Activated T-helper 1 cell treated with anti-CD3 and anti-CD28 coated beads, Interleukin-12 subunit alpha, Interleukin-12 subunit beta, Interleukin-2, Interleukin-4 antibody, amounts not matched to agents 30 ng/mL and 10 ng/mL and 1 ng/mL, durations not matched to agents 14 hours and 24 hours and 36 hours (primary cell): ENCODE measurements at regions of chr14 and their contacts with region 1.

Region 1: DNA sequence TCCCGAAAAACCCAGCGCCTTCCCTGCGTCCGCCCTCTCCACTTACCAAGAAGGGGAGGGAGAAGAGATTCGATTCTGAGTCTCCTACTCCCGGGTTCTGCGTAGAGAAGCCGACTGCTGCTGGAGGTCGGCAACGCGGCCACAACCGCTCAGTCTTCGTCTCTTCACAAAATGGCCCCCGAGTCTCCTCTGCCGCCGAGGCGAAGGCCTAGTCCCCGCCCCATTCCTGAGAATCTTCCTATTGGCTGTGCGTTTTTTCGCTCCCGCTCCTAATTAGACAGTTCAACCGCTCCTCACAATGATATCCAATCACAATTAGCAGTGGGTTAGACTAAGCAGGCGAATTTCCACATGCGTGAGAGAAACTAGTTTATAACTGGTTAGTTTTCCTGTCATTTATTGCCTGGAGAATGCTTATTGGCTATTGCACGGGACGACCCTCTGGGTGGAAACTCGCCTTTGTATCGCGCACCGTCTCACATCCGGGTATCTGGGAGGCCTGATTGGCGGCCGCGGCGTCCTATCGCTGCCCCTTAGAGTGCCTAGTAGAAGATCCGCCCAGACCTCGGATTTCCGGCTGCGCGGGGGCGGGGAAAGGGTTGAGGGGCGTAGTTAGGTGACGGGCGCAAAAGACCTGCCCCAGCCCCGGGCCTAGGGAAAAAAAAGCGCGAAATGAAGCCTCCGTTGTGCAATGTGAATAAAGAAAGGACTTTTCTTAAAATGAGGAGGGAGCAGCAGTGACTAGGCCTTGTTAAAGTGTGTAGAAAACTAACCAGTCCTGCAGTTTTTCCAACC is at the start of gene HNRNPC:
- DNase-seq: peak; percentile 100
- H3K4me3 Mint-ChIP-seq: peak within 1 kb of the TSS; percentile 99
- H3K27ac Mint-ChIP-seq: peak within 1 kb of the TSS; percentile 100
- H3K4me1 Mint-ChIP-seq: peaks cover 34% of the 10 kb centered on the region
- H3K27me3 Mint-ChIP-seq: no peaks in the 10 kb centered on the region
- total RNA-seq, gene HNRNPC: 958 and 976 TPM in 2 replicates

Region 2: DNA sequence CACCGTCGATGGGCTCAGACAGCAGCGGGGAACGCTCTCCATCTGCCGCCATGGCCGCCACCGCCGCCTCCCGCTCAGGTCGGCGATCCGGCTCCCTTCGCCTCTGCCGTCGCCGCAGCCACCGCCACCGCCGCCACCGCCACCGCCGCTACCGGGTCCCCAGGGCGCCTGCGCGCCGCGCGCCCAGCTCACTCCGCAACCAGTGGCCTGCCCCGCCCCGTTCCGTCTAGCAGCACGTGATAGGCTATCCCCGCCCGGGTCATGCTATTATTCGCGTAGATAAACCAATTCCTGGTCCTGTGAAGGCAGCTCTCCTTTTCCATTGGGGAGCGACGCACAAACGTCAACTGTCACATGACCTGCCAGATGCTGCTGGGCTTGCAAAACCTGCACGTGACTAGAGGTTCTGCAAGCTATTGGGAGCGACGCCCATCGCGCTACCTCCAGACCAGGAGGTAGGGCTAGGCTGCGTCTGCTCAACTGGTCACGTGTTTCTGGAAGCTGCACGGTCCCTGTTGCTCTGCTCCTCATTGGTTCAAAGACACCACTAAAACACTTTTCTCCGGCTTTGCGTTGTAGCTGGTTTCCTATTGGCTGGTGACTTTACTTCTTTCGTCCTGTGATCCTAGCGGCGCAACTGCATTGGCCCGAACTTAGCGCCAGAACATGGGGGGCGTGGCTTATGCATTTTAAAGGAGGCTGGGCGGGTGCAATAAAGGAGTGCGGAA is 808.0 kb before region 1 on chr14 and contains the start of gene PIP4P1:
- intact Hi-C with region 1: loop called (anchors 5 kb)
- DNase-seq: peak; percentile 99
- H3K4me3 Mint-ChIP-seq: peak within 1 kb of the TSS; percentile 94
- H3K27ac Mint-ChIP-seq: peak within 1 kb of the TSS; percentile 87
- H3K4me1 Mint-ChIP-seq: peaks cover 23% of the 10 kb centered on the region
- H3K27me3 Mint-ChIP-seq: no peaks in the 10 kb centered on the region
- total RNA-seq, gene PIP4P1: 36.6 and 37.0 TPM in 2 replicates

Region 3: GRCh38 chr14:21308479-21309237 is 39.2 kb after region 1 on chr14:
- intact Hi-C with region 1: loop called (anchors 1 kb)
- DNase-seq: peak; percentile 65
- H3K4me3 Mint-ChIP-seq: peak overlapping the region; percentile 64
- H3K27ac Mint-ChIP-seq: peak overlapping the region; percentile 64
- H3K4me1 Mint-ChIP-seq: peaks cover 16% of the 10 kb centered on the region
- H3K27me3 Mint-ChIP-seq: peaks cover 3% of the 10 kb centered on the region

Region 4: DNA sequence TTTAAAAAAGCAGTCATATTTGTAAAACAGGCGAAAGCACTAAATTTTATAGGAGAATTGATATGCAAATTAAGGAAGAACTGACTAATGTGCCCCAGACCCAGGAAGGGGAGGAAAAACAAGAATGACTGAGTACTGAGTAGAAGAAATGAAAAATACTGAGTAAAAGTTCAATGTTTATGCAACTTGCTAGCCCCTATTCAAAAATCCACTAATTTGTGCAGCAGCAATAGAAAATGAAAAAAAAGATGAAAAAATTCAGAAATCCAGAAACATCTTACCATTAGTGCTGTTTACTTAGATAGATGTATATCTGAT is 180.4 kb after region 1 on chr14:
- intact Hi-C with region 1: loop called (anchors 1 kb)
- DNase-seq: no peak
- H3K4me3 Mint-ChIP-seq: peak overlapping the region; percentile 27
- H3K27ac Mint-ChIP-seq: peak overlapping the region; percentile 84
- H3K4me1 Mint-ChIP-seq: peaks cover 51% of the 10 kb centered on the region
- H3K27me3 Mint-ChIP-seq: no peaks in the 10 kb centered on the region

Region 5: GRCh38 chr14:21510735-21511657 is 241.5 kb after region 1 on chr14 and contains the start of gene METTL3:
- intact Hi-C with region 1: loop called (anchors 1 kb)
- DNase-seq: peak; percentile 93
- H3K4me3 Mint-ChIP-seq: peak within 1 kb of the TSS; percentile 99
- H3K27ac Mint-ChIP-seq: peak within 1 kb of the TSS; percentile 93
- H3K4me1 Mint-ChIP-seq: peaks cover 27% of the 10 kb centered on the region
- H3K27me3 Mint-ChIP-seq: peaks cover 12% of the 10 kb centered on the region
- total RNA-seq, gene METTL3: 75.1 and 77.7 TPM in 2 replicates

Region 6: GRCh38 chr14:22872033-22872832 is 1602.8 kb after region 1 on chr14:
- intact Hi-C with region 1: loop called (anchors 1 kb)
- DNase-seq: peak; percentile 63
- H3K4me3 Mint-ChIP-seq: peak overlapping the region; percentile 91
- H3K27ac Mint-ChIP-seq: peak overlapping the region; percentile 80
- H3K4me1 Mint-ChIP-seq: peaks cover 22% of the 10 kb centered on the region
- H3K27me3 Mint-ChIP-seq: no peaks in the 10 kb centered on the region